ENCODE measurements at regions of chr11 and their contacts with region 1.

Region 1: GRCh38 chr11:26297189-26297975 is 34.5 kb upstream of the ANO3 start:
- DNase-seq: no peak
- ATAC-seq: peak in 3 of 8 donors; percentile 37 to 70 (median 46)
- H3K4me3 ChIP-seq: no peak overlapping the region
- H3K27ac ChIP-seq: no peak overlapping the region
- H3K4me1 ChIP-seq: no peaks in the 10 kb centered on the region
- H3K27me3 ChIP-seq: peaks cover 0 to 13% (median 0%) of the 10 kb centered on the region in 7 donors
- CTCF ChIP-seq: peak; percentile 23 to 65 (median 60)

Region 2: DNA sequence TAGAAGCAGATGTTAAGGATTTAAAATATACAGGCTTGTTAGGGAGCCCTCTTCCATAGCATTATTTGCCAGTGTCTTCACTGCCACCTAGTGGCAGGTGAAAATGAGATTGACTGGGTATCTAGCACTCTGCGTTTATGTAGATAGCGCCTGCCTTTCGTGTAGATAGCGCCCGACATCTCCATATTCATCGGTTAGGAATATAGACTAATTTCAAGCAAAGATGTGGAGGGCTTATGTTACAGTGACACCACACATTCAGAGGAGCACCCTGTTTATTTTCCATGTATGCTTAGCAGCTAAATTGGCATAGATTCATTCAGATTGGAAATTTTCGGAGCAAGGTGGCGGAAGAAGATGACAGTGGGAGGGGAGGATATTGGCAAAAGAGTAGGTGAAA is 352.5 kb after region 1 on chr11:
- intact Hi-C with region 1: loop called in 2 of 10 experiments (anchors 5 to 10 kb)
- DNase-seq: peak in 1 of 2 donors; percentile 14
- ATAC-seq: peak in 2 of 8 donors; percentile 48 to 50
- H3K4me3 ChIP-seq: no peak overlapping the region
- H3K27ac ChIP-seq: no peak overlapping the region
- H3K4me1 ChIP-seq: no peaks in the 10 kb centered on the region
- H3K27me3 ChIP-seq: peaks cover 0 to 3% (median 0%) of the 10 kb centered on the region in 7 donors
- CTCF ChIP-seq: peak in 8 of 9 donors; percentile 20 to 65 (median 54)

Region 3: GRCh38 chr11:27158722-27159679 is 861.6 kb after region 1 on chr11:
- intact Hi-C with region 1: loop called (anchors 2 to 10 kb)
- DNase-seq: peak in 1 of 2 donors; percentile 48
- ATAC-seq: peak; percentile 64 to 88 (median 84)
- H3K4me3 ChIP-seq: no peak overlapping the region
- H3K27ac ChIP-seq: no peak overlapping the region
- H3K4me1 ChIP-seq: no peaks in the 10 kb centered on the region
- H3K27me3 ChIP-seq: no peaks in the 10 kb centered on the region
- CTCF ChIP-seq: peak; percentile 49 to 82 (median 69)